Dendritic cell treated with granulocyte-macrophage colony-stimulating factor and Interleukin-4, amounts not matched to agents 40 ng/mL and 50 ng/mL, for 4 days (primary cell): ENCODE measurements at regions of chr15 and their contacts with region 1.

Region 1: DNA sequence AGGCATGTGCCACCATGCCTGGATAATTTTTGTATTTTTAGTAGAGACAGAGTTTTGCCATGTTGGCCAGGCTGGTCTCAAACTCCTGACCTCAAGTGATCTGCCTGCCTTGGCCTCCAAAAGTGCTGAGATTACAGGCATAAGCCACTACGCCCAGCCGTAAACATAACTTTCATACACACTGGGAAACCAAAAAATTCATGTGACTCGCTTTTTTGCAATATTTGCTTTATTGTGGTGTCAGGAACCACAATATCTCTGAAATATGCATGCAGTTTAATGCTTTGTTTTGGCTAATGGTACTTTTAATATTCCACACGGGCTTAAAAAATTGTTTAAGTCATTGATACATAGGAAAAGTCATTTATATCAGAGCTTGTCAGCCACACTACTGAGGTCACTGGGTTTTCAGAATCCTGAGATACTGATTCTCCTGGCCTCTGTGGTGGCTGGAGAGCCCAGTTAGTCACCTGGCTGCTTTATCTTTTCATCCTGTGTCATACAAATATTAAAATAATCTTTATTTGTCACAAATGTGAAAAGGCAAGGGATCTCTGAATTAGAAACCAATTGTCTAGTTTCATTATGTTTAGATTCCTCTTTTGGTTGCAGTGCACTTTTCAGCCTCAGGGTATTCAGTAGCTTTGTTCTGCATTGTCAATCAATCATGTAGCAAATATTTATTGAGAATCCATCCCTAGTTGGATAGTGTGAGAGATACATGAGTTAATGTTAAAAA is 10.0 kb downstream of the TMEM62 start:
- H3K4me3 Mint-ChIP-seq: no peak overlapping the region
- H3K27ac Mint-ChIP-seq: peak overlapping the region; percentile 42
- H3K4me1 Mint-ChIP-seq: peaks cover 25% of the 10 kb centered on the region
- H3K27me3 Mint-ChIP-seq: no peaks in the 10 kb centered on the region

Region 2: DNA sequence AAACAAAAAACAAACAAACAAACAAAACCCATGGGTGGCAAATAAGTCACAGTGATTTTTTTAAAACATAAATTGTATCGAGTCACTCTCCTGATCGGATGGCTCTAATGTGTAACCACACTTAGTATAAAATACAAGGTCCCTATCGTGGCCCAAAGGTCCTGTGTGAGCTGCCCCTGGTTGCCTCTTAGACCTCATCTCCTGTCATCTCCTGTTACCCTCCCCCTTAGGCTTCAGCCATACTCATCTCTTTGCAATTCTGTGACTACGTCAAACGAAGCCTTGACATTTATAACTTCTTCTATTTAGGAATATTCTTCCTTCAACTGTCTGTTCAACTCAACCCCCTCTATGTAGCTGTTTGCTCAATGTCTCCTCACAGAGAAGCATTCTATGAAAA is 178.9 kb before region 1 on chr15:
- intact Hi-C with region 1: no loop called
- H3K4me3 Mint-ChIP-seq: no peak overlapping the region
- H3K27ac Mint-ChIP-seq: no peak overlapping the region
- H3K4me1 Mint-ChIP-seq: peaks cover 9% of the 10 kb centered on the region
- H3K27me3 Mint-ChIP-seq: no peaks in the 10 kb centered on the region

Region 3: GRCh38 chr15:43008150-43008549 is 135.2 kb before region 1 on chr15:
- intact Hi-C with region 1: no loop called
- H3K4me3 Mint-ChIP-seq: no peak overlapping the region
- H3K27ac Mint-ChIP-seq: no peak overlapping the region
- H3K4me1 Mint-ChIP-seq: no peaks in the 10 kb centered on the region
- H3K27me3 Mint-ChIP-seq: no peaks in the 10 kb centered on the region

Region 4: GRCh38 chr15:43093026-43093425 is 50.3 kb before region 1 on chr15:
- intact Hi-C with region 1: loop called (anchors 10 kb)
- H3K4me3 Mint-ChIP-seq: no peak overlapping the region
- H3K27ac Mint-ChIP-seq: no peak overlapping the region
- H3K4me1 Mint-ChIP-seq: peaks cover 20% of the 10 kb centered on the region
- H3K27me3 Mint-ChIP-seq: no peaks in the 10 kb centered on the region

Region 5: DNA sequence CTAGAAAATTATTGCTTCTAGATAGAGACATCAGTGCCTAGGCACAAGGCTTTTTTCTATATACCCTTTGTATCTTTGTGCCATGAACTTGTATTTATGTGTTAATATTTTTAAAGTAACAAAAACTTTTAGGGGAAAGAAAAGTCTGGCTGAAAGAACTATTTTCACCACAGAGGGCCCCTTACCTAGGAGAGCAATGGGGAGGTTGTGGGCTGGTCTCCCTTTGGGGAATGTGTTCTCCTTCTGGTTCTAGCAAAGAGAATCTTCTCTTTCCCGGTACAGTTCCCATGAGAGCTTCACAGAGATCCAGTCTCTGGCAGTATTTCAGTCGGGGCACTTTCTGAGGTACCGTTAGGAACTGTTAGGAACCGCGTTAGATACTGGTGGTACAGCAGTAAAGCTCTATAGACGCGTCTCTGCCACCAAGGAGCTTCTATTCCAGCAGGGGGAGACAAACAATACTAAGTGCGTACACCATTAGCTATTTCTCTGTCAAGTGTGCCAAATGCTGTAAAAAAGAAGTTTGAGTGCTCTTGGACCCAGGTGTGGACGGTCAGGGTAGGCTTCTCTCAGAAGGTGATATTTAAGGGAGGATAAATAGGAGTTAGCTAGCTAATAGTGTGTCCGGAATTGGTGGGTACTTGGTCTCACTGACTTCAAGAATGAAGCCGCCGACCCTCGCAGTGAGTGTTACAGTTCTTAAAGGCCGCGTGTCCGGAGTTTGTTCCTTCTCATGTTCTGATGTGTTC is 82.0 kb after region 1 on chr15:
- intact Hi-C with region 1: no loop called
- H3K4me3 Mint-ChIP-seq: no peak overlapping the region
- H3K27ac Mint-ChIP-seq: no peak overlapping the region
- H3K4me1 Mint-ChIP-seq: no peaks in the 10 kb centered on the region
- H3K27me3 Mint-ChIP-seq: peaks cover 26% of the 10 kb centered on the region